ENCODE measurements at regions of chr20 and their contacts with region 1.

Region 1: DNA sequence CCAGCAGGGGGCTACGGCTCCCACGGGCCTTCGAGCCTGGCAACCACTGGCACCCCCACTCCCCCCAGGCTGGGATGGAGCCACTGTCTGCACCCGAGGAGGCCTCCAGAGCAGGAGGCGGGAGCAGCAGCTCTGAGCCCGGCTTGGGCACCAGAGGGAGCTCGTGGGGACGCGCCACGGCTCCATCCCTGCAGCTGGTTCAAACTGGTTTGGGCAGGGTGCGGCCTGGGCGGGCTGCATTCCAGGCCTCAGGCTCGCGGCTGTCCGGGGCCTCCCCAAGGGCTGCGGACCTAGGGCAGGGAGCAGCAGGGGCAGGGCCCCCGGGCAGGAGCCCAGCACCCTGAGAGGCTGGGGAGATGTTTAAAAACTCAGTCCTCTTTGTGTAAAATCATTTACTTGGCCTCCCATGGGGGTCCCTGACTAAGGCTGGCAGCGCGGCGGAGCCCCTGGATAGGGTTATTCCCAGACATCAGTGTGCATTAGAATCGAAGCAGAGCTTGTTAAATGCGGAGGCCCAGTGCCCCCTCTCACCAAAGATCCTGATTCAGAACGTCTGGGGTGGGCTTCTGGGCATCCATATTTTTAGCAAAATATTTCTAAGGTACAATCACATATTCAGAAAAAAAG is 4.1 kb upstream of the BCAS4 start:
- DNase-seq: peak; percentile 94
- H3K4me3 ChIP-seq: no peak overlapping the region; a peak in 1 of 4 replicates
- H3K27ac ChIP-seq: peak overlapping the region; percentile 73 to 80
- H3K4me1 ChIP-seq: peaks cover 12 to 21% of the 10 kb centered on the region in 2 experiments
- H3K27me3 ChIP-seq: no peaks in the 10 kb centered on the region
- CTCF ChIP-seq: peak; percentile 74
- EP300 ChIP-seq: peak; percentile 30 to 36; a peak in 2 of 4 replicates
- RAD21 ChIP-seq: peak; percentile 40

Region 2: DNA sequence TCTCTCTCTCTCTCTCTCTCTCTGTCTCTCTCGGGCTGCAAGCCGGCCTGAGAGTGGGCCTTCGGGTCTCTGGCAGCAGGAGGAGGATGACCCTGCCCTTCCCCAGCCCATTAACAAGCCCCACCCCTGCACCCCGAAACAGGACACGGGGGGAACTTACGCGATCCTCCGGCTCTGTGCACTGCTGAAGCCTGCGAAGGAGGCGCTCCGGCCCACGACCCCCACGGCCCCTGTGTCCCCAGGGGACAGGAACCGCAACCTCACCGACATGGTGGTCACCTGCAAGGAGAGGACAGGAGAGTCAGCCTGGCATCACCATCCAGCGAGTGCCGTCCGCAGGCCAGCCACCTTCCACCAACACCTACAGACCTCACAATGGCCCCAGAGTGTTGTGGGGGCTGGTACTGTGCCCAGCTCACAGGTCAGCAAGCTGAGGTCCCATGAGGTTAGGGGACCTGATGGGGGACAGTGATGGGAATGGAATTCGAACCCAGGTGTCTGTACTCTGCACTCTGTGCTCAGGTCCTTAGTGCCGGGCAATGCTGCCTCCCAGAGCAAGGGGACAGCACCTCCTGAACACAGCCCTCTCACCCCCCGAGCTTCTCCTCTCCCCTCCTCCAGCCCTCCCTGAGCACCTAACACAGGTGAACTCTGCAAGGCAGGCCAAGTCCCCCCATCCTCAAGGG is 160.0 kb before region 1 on chr20:
- CTCF ChIA-PET with region 1: no interaction called
- POLR2A ChIA-PET with region 1: no interaction called
- DNase-seq: no peak
- H3K4me3 ChIP-seq: no peak overlapping the region
- H3K27ac ChIP-seq: no peak overlapping the region
- H3K4me1 ChIP-seq: peaks cover 0 to 17% of the 10 kb centered on the region in 2 experiments; a peak in 1 of 4 replicates
- H3K27me3 ChIP-seq: no peaks in the 10 kb centered on the region
- CTCF ChIP-seq: no peak
- EP300 ChIP-seq: no peak
- RAD21 ChIP-seq: no peak

Region 3: GRCh38 chr20:50776122-50776817 is 14.5 kb before region 1 on chr20:
- CTCF ChIA-PET with region 1: interaction called, 11 read pairs
- POLR2A ChIA-PET with region 1: no interaction called
- DNase-seq: no peak
- H3K4me3 ChIP-seq: no peak overlapping the region
- H3K27ac ChIP-seq: no peak overlapping the region
- H3K4me1 ChIP-seq: peaks cover 0 to 2% of the 10 kb centered on the region in 2 experiments; a peak in 1 of 4 replicates
- H3K27me3 ChIP-seq: no peaks in the 10 kb centered on the region
- CTCF ChIP-seq: no peak
- EP300 ChIP-seq: no peak
- RAD21 ChIP-seq: no peak

Region 4: DNA sequence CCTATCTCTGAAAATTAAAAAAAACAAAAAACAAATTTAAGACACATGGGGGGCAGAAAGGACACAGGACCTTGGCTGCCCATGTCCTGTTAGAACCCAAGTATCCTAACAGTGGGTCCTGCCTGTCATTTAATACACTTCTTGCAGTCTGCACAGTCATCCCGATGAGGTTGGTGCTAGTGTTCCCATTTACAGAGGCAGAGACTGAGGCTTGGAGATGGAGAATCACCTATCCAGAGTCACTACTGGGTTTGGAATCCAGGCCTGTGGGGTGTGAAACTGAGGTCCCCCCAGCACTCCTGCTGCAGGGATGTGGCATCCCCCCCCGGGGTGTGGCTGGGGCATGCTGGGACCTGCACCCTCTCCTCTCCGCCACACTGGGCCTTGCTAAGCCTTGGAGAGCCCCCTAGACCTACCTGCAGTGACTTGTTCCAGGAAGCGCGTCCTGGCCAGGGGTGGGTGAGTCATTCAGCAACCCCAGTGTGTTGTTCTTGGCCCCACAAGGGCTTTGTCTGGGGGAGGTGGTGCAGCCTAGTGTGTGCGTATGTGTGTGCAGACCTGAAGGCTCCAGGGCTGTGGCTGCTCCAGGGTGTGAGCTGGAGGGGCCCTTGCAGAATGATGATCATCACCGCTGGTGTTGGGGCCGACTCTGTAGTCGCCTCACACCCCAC is 53.8 kb after region 1 on chr20:
- CTCF ChIA-PET with region 1: interaction called, 16 read pairs
- POLR2A ChIA-PET with region 1: no interaction called
- DNase-seq: no peak
- H3K4me3 ChIP-seq: no peak overlapping the region
- H3K27ac ChIP-seq: no peak overlapping the region
- H3K4me1 ChIP-seq: peaks cover 9 to 31% of the 10 kb centered on the region in 2 experiments; a peak in 3 of 4 replicates
- H3K27me3 ChIP-seq: no peaks in the 10 kb centered on the region
- CTCF ChIP-seq: no peak
- EP300 ChIP-seq: no peak
- RAD21 ChIP-seq: no peak

Region 5: DNA sequence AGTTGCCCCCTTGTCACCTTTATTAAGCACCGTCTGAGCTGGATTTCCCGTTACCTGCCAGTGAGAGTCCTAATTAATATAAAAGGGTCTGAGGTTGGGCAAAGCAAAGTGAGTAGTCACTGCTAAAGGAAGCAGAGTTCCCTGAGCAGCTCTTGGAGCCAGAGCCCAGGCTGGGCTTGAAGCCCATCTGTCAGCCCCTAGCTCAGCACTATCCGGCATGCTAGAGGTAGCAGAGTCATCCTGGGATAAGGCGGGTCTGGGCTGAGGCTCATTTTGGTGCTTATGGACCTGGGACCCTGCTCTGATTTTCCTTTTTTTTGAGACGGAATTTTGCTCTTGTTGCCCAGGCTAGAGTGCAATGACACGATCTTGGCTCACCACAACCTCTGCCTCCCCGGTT is 94.3 kb after region 1 on chr20:
- CTCF ChIA-PET with region 1: interaction called, 17 read pairs
- POLR2A ChIA-PET with region 1: no interaction called
- DNase-seq: no peak
- H3K4me3 ChIP-seq: no peak overlapping the region
- H3K27ac ChIP-seq: no peak overlapping the region
- H3K4me1 ChIP-seq: no peaks in the 10 kb centered on the region
- H3K27me3 ChIP-seq: no peaks in the 10 kb centered on the region
- CTCF ChIP-seq: no peak
- EP300 ChIP-seq: no peak
- RAD21 ChIP-seq: no peak

Region 6: GRCh38 chr20:50913690-50914375 is 123.1 kb after region 1 on chr20:
- CTCF ChIA-PET with region 1: interaction called, 32 read pairs
- POLR2A ChIA-PET with region 1: no interaction called
- DNase-seq: no peak
- H3K4me3 ChIP-seq: no peak overlapping the region
- H3K27ac ChIP-seq: peak overlapping the region; percentile 71
- H3K4me1 ChIP-seq: peaks cover 60 to 79% of the 10 kb centered on the region in 2 experiments
- H3K27me3 ChIP-seq: no peaks in the 10 kb centered on the region
- CTCF ChIP-seq: no peak
- EP300 ChIP-seq: peak in 1 of 2 experiments; percentile 17; a peak in 1 of 4 replicates
- RAD21 ChIP-seq: no peak